GM10248 (cell line): ENCODE measurements at regions of chr14 and their contacts with region 1.

Region 1: GRCh38 chr14:76911473-76911872 is 85.3 kb downstream of the LRRC74A start:
- DNase-seq: no peak
- CTCF ChIP-seq: no peak

Region 2: GRCh38 chr14:76924371-76925096 is 13.1 kb after region 1 on chr14:
- CTCF ChIA-PET with region 1: interaction called, 47 read pairs
- POLR2A ChIA-PET with region 1: no interaction called
- DNase-seq: no peak
- CTCF ChIP-seq: no peak

Region 3: DNA sequence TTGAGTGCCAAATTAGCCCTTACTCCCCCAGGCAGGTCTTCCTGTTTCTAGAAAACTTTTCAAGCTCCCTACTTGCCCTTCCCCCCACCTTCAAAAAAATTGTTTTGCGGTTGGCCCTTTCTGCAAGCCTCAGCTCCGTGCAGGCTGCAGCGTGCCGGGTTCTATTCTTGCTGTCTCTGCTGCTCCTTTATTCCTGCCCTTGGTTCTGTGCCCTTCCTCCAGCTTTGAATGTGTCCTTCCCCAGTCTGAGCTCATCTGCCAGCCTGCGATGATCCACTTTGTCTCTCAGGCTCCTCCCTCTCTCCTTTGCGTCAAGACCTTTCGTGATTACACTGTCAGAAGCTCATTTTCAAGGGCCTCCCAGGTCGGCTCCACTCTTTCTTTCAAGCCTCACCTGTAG is 18.5 kb after region 1 on chr14:
- CTCF ChIA-PET with region 1: interaction called, 47 read pairs
- POLR2A ChIA-PET with region 1: no interaction called
- DNase-seq: no peak
- CTCF ChIP-seq: no peak